ENCODE measurements at regions of chr6 and their contacts with region 1.

Region 1: DNA sequence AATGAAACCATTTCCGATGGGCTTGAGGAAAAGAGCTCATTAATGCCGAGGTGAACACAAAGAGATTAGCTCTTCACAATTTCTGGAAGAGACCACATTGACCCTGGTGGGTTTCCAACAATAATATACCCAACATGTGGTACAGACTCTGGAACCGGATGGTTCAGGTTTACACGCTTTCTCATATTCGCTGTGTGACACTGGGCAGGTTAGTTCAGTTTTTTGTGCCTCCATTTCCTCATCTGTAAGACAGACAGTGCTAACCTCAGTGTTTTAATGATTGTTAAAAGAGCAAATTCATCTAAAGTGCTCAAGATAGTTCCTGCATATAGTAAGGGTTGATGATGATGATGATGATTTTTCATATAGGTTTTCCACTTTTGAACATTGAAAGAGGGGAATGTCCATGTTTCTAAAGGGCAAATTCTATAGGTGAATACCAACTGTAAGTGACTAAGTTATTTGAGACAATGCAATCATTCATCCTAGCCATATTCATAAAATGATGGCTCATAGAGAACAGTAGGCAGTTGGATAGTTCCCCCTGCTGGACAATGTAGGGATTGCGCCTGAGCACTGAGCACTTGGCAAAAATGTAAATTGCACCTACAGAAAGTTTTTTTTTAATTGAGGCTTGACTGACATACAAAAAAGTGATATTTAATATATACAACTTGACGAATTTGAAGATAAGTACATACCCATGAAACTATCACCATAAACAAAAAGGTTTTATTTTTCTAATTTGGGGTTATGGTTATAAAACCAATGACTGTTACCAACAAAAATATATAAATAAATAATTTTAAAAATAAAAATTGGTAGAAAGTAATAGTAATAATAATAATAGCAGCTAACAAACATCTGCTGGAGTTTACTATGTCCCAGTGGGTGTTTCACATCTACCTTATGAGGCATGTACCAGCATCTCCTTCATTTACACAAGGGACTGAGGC is 2.1 kb upstream of the PERP start:
- DNase-seq: peak; percentile 53 to 75 (median 71)
- H3K4me3 ChIP-seq: no peak overlapping the region
- H3K4me3 Mint-ChIP-seq: peak overlapping the region in 1 of 2 donors; percentile 70
- H3K27ac ChIP-seq: no peak overlapping the region
- H3K27ac Mint-ChIP-seq: no peak overlapping the region
- H3K4me1 ChIP-seq: peaks cover 10 to 16% of the 10 kb centered on the region in 2 donors
- H3K4me1 Mint-ChIP-seq: peaks cover 20% of the 10 kb centered on the region
- H3K27me3 ChIP-seq: peaks cover 45 to 49% of the 10 kb centered on the region in 2 donors
- H3K27me3 Mint-ChIP-seq: peaks cover 51 to 59% (median 55%) of the 10 kb centered on the region in 3 donors
- CTCF ChIP-seq: peak; percentile 98

Region 2: GRCh38 chr6:137661601-137662000 is 447.7 kb before region 1 on chr6:
- intact Hi-C with region 1: loop called in 1 of 2 experiments (anchors 10 kb)
- DNase-seq: peak in 2 of 3 donors; percentile 42 to 59
- H3K4me3 ChIP-seq: no peak overlapping the region
- H3K4me3 Mint-ChIP-seq: no peak overlapping the region
- H3K27ac ChIP-seq: no peak overlapping the region
- H3K27ac Mint-ChIP-seq: no peak overlapping the region
- H3K4me1 ChIP-seq: no peaks in the 10 kb centered on the region
- H3K4me1 Mint-ChIP-seq: no peaks in the 10 kb centered on the region
- H3K27me3 ChIP-seq: no peaks in the 10 kb centered on the region
- H3K27me3 Mint-ChIP-seq: peaks cover 0 to 2% (median 1%) of the 10 kb centered on the region in 3 donors
- CTCF ChIP-seq: peak; percentile 39

Region 3: DNA sequence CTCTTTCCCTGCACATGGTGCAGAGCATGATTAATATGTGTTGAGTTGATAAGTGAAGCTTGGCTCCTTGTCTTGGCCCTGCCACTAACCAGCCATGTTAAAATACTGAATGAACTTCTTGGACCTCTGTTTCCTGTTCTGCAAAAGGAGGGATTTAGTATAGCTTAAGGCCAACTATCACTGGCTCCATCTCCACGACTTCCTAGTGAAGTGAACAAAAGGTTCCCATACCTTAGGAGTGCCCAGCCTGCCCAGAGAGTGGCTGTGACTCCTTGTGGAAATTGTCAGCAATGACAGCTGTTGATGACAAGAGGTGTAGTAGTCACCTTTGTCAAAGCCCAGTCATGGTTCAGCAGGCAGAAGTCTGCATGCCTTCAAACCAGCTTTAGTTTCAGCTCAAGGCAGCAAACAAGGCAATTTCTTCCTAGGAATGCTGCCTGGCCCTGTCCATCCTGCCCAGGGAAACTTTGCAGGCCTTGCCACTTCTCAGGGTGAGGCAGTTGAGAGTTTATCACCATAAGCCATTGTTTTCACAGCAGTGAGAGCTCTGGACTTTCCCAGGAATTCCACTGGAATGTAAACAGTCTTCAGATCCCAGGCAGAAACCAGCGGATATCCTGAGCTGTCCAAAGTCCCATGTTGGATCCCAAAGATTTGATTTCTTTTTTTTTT is 411.9 kb before region 1 on chr6:
- intact Hi-C with region 1: loop called in 1 of 2 experiments (anchors 10 kb)
- DNase-seq: no peak
- H3K4me3 ChIP-seq: no peak overlapping the region
- H3K4me3 Mint-ChIP-seq: no peak overlapping the region
- H3K27ac ChIP-seq: no peak overlapping the region
- H3K27ac Mint-ChIP-seq: peak overlapping the region in 2 of 7 donors; percentile 41 to 53
- H3K4me1 ChIP-seq: peaks cover 37 to 39% of the 10 kb centered on the region in 2 donors
- H3K4me1 Mint-ChIP-seq: peaks cover 42% of the 10 kb centered on the region
- H3K27me3 ChIP-seq: no peaks in the 10 kb centered on the region
- H3K27me3 Mint-ChIP-seq: peaks cover 0 to 2% (median 0%) of the 10 kb centered on the region in 3 donors
- CTCF ChIP-seq: no peak

Region 4: DNA sequence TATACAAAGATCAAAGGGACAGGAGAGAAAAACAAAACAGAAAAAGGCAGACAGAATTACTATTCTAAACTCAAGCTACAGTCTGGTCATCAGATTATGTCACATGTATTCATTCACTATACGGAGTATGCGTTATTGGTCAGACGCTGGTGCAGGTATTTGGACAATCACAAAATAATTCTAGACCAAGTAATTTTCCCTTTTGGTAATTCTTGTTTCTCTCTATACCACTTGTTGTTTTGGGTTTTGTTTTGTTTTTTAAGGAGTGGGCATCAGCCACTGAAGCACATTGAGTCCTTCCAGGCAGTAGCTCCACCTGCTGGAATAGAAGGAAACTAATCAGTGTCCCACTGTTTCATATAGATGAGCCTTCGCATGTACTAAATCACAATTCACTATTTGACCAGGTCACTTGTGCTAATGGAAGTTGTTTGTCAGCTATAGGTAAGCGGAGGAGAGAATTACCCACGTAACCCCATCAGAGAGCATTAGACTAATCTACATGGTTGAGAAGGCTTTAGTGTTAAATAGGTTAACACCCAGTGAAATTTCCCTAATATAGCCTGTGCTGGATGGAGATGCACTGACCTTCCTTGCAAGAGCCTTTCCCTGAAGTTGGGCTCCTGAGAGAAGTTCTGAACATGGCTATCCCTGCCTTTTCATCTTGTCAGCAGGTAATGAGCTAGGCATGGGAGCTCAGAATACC is 164.4 kb before region 1 on chr6:
- intact Hi-C with region 1: no loop called
- DNase-seq: peak; percentile 32 to 63 (median 56)
- H3K4me3 ChIP-seq: no peak overlapping the region
- H3K4me3 Mint-ChIP-seq: peak overlapping the region in 1 of 2 donors; percentile 29
- H3K27ac ChIP-seq: no peak overlapping the region
- H3K27ac Mint-ChIP-seq: peak overlapping the region in 4 of 7 donors; percentile 7 to 73 (median 54)
- H3K4me1 ChIP-seq: peaks cover 8 to 20% of the 10 kb centered on the region in 2 donors
- H3K4me1 Mint-ChIP-seq: peaks cover 26% of the 10 kb centered on the region
- H3K27me3 ChIP-seq: no peaks in the 10 kb centered on the region
- H3K27me3 Mint-ChIP-seq: peaks cover 0 to 6% (median 0%) of the 10 kb centered on the region in 3 donors
- CTCF ChIP-seq: peak; percentile 83

Region 5: DNA sequence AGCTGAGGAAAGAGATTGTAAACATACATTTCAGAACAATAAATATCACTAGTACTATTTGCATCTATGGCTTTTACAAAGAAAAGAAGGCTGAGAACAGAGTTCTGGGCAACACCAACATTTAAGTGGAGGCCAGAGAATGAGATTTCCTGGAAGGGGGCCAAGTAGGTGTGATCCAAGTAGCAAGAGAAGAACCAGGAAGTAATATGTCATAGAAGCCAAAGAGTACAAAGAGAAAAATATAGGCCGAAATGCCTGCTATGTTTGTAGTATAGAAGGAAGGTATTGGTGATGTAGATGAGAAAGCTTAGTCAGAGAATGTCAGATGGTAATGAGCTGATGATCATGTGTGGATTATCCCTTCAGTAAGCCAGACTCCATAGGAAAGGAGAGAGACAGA is 96.6 kb before region 1 on chr6:
- intact Hi-C with region 1: loop called in 1 of 2 experiments (anchors 10 kb)
- DNase-seq: no peak
- H3K4me3 ChIP-seq: no peak overlapping the region
- H3K4me3 Mint-ChIP-seq: no peak overlapping the region
- H3K27ac ChIP-seq: no peak overlapping the region
- H3K27ac Mint-ChIP-seq: no peak overlapping the region
- H3K4me1 ChIP-seq: peaks cover 4 to 8% of the 10 kb centered on the region in 2 donors
- H3K4me1 Mint-ChIP-seq: peaks cover 10% of the 10 kb centered on the region
- H3K27me3 ChIP-seq: no peaks in the 10 kb centered on the region
- H3K27me3 Mint-ChIP-seq: no peaks in the 10 kb centered on the region
- CTCF ChIP-seq: no peak